Activated naive CD4-positive, alpha-beta T cell treated with anti-CD3 and anti-CD28 coated beads for 36 hours (primary cell): ENCODE measurements at regions of chr2 and their contacts with region 1.

Region 1: GRCh38 chr2:12606472-12607000 is 110.2 kb upstream of the TRIB2 start:
- DNase-seq: no peak
- H3K4me3 Mint-ChIP-seq: no peak overlapping the region
- H3K27ac Mint-ChIP-seq: no peak overlapping the region
- H3K4me1 Mint-ChIP-seq: peaks cover 14% of the 10 kb centered on the region
- H3K27me3 Mint-ChIP-seq: no peaks in the 10 kb centered on the region

Region 2: DNA sequence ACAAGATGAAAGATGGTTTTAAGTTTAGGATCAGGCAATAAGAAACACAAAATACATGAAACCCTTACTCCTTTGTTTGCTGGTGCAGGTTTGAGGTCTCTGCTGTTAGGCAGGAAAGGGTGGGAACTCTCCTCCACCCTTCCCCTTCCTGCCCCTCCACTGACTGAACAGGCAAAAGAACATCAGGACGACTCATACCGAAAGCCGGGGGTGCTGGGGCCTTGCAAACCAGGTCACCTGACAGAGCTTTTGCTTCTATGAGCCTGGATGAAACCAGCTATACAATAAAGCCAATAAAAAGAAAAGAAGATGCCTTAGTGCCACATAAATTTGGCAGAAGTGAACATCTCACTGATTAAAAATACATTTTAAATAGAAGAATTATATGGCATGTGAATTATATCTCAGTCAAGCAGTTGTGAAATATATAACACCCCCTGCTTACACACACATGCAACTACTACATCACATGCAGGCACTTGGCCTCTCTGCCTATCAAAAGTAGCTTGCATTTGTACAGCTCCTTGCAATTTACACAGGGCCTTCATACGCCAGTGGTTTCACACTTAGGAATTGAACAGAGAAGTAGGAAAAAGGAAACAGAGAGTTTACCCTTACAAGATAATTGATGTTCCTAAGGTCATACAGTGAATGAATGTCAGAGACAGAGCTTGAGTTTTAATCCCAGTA is 104.9 kb before region 1 on chr2:
- CTCF ChIA-PET with region 1: no interaction called
- intact Hi-C with region 1: loop called (anchors 5 kb)
- DNase-seq: peak; percentile 88
- H3K4me3 Mint-ChIP-seq: no peak overlapping the region
- H3K27ac Mint-ChIP-seq: peak overlapping the region; percentile 47
- H3K4me1 Mint-ChIP-seq: peaks cover 91% of the 10 kb centered on the region
- H3K27me3 Mint-ChIP-seq: no peaks in the 10 kb centered on the region

Region 3: DNA sequence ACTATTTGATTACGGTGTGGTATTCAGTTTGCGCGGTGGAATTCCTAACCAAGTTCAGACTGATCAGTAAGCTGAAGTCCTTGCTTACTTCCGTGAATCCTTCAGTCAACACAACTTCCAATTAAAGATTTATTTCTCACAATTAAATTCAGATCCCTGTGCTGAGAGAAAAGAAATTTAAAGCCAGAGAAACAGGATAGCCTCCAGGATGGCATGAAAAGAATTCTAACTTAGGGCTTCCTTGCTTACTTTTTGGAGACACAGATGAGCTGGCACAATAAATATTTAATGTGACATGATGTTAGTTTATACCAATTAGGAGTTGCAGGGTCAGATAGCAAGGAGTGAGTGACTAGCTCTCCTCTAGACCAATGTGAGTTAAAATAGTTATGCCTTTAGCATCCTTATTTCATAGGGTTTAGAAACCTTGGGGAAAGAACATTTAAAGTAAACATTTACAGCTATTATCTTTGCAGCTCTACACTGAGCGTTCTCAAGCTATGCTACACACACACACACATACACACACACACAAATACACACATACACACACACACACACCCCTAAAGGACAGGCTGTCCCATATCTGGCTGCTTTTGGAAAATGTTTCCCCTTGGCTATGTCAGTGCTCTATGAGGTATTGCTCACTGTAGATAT is 261.2 kb after region 1 on chr2:
- CTCF ChIA-PET with region 1: no interaction called
- intact Hi-C with region 1: no loop called
- DNase-seq: no peak
- H3K4me3 Mint-ChIP-seq: no peak overlapping the region
- H3K27ac Mint-ChIP-seq: no peak overlapping the region
- H3K4me1 Mint-ChIP-seq: peaks cover 1% of the 10 kb centered on the region
- H3K27me3 Mint-ChIP-seq: peaks cover 5% of the 10 kb centered on the region